ENCODE measurements at regions of chr3 and their contacts with region 1.

Region 1: DNA sequence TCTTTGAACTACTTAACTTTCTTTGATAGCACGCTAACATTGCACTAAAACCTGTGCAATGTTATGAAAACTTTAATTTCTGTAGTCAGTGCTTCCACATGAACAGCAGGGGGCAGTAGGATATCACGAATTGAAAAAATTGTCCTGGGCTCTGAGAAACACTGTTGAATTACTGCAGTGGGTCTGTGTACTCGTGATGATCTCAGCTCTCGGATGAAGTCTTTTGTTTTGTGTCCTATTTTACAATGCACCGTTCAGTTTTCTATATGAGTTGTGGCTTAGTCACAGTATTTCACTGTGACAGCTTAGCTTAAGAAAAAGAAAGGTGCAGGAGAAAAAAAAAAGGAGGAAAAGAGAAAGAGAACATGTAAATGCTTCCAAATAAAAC is 141.3 kb upstream of the CCDC54 start:
- DNase-seq: peak; percentile 66
- ATAC-seq: peak; percentile 86
- H3K4me3 ChIP-seq: peak overlapping the region; percentile 47 to 70 (median 60); a peak in 5 of 6 replicates
- H3K27ac ChIP-seq: no peak overlapping the region
- H3K4me1 ChIP-seq: peaks cover 17% of the 10 kb centered on the region
- H3K27me3 ChIP-seq: peaks cover 1 to 11% of the 10 kb centered on the region in 2 experiments; a peak in 3 of 5 replicates
- CTCF ChIP-seq: peak; percentile 84
- EP300 ChIP-seq: no peak
- POLR2A ChIP-seq: no peak
- RAD21 ChIP-seq: peak; percentile 69

Region 2: DNA sequence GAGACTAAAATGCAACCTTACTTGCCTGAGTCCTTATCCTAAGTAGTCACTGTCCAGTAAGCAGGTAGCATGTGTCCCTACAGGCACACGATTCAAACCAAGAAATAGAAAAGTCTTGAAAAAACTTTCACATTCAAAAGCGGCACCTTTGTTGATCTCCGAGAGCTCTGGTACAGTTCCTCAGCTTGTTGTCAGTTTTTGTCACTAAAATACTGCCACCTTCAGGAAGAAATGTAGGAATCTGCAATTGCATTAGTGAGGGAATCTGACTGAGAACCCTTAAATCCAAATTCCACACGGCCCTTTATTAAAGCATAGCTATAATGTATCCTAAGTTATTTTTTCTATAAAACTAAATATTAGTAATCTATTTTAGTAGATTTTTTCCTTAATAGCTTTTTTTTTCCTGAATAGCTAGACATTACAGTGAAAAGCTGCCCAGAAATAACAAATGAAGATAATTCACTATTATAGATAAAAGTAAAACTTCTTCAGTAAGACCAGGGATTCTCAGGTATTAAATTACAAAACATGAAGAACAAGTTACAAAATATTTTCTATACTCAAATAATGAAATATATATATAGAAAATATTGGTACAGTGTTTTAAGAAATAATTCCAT is 185.4 kb after region 1 on chr3:
- CTCF ChIA-PET with region 1: interaction called, 6 read pairs
- POLR2A ChIA-PET with region 1: no interaction called
- in situ Hi-C with region 1: loop called (anchors 10 kb)
- intact Hi-C with region 1: loop called (anchors 1 kb)
- DNase-seq: peak; percentile 52
- ATAC-seq: peak; percentile 75
- H3K4me3 ChIP-seq: no peak overlapping the region
- H3K27ac ChIP-seq: no peak overlapping the region
- H3K4me1 ChIP-seq: no peaks in the 10 kb centered on the region
- H3K27me3 ChIP-seq: no peaks in the 10 kb centered on the region; a peak in 1 of 5 replicates
- CTCF ChIP-seq: peak; percentile 71
- EP300 ChIP-seq: no peak
- POLR2A ChIP-seq: no peak
- RAD21 ChIP-seq: no peak

Region 3: GRCh38 chr3:107522510-107523288 is 286.8 kb after region 1 on chr3 and contains the start of gene BBX:
- CTCF ChIA-PET with region 1: no interaction called
- POLR2A ChIA-PET with region 1: no interaction called
- in situ Hi-C with region 1: loop called (anchors 25 kb)
- intact Hi-C with region 1: no loop called
- DNase-seq: peak; percentile 88
- ATAC-seq: peak; percentile 95
- H3K4me3 ChIP-seq: peak within 1 kb of the TSS; percentile 80 to 91 (median 86)
- H3K27ac ChIP-seq: peak within 1 kb of the TSS; percentile 82
- H3K4me1 ChIP-seq: peaks cover 20% of the 10 kb centered on the region
- H3K27me3 ChIP-seq: no peaks in the 10 kb centered on the region; a peak in 2 of 5 replicates
- CTCF ChIP-seq: no peak
- EP300 ChIP-seq: no peak
- POLR2A ChIP-seq: peak; percentile 52 to 74
- RAD21 ChIP-seq: 0 out of 2 replicates have a peak, but pooled peaks have one; percentile 18
- total RNA-seq, gene BBX: 13.7 and 20.6 TPM in 2 replicates

Region 4: DNA sequence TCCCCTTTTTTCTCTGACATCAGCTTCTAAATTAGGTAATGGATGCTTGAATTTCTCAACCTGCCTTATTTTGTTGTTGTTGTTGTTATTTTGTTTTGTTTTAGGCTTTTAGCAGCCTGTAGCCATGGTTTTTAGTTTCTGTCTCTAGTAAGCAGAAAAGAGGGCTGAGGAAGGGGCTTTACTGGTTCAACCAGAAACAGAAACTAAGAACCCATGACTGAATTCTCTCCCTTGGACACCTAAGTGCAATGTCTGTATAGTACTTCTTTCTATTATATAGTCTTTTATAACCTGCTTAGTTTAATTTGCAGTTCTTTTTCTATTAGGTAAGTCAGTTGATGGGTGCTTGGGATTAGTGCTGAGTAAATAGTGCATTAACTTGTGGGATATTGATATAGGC is 415.9 kb after region 1 on chr3:
- CTCF ChIA-PET with region 1: no interaction called
- POLR2A ChIA-PET with region 1: no interaction called
- in situ Hi-C with region 1: no loop called
- intact Hi-C with region 1: loop called (anchors 10 kb)
- DNase-seq: no peak
- ATAC-seq: no peak
- H3K4me3 ChIP-seq: no peak overlapping the region
- H3K27ac ChIP-seq: no peak overlapping the region
- H3K4me1 ChIP-seq: no peaks in the 10 kb centered on the region
- H3K27me3 ChIP-seq: no peaks in the 10 kb centered on the region
- CTCF ChIP-seq: no peak
- EP300 ChIP-seq: no peak
- POLR2A ChIP-seq: no peak
- RAD21 ChIP-seq: no peak

Region 5: GRCh38 chr3:107846279-107846852 is 610.4 kb after region 1 on chr3:
- CTCF ChIA-PET with region 1: interaction called, 6 read pairs
- POLR2A ChIA-PET with region 1: no interaction called
- in situ Hi-C with region 1: loop called (anchors 25 kb)
- intact Hi-C with region 1: loop called (anchors 2 kb)
- DNase-seq: peak; percentile 47
- ATAC-seq: peak; percentile 97
- H3K4me3 ChIP-seq: peak overlapping the region in 1 of 3 experiments; percentile 0; a peak in 1 of 6 replicates
- H3K27ac ChIP-seq: no peak overlapping the region
- H3K4me1 ChIP-seq: peaks cover 35% of the 10 kb centered on the region
- H3K27me3 ChIP-seq: peaks cover 0 to 15% of the 10 kb centered on the region in 2 experiments; a peak in 2 of 5 replicates
- CTCF ChIP-seq: peak; percentile 89
- EP300 ChIP-seq: no peak
- POLR2A ChIP-seq: no peak
- RAD21 ChIP-seq: peak; percentile 74

Region 6: GRCh38 chr3:108406661-108407206 is 1170.8 kb after region 1 on chr3:
- CTCF ChIA-PET with region 1: no interaction called
- POLR2A ChIA-PET with region 1: no interaction called
- in situ Hi-C with region 1: no loop called
- intact Hi-C with region 1: loop called (anchors 2 kb)
- DNase-seq: peak; percentile 71
- ATAC-seq: peak; percentile 99
- H3K4me3 ChIP-seq: no peak overlapping the region
- H3K27ac ChIP-seq: no peak overlapping the region
- H3K4me1 ChIP-seq: peaks cover 8% of the 10 kb centered on the region
- H3K27me3 ChIP-seq: peaks cover 0 to 4% of the 10 kb centered on the region in 2 experiments; a peak in 2 of 5 replicates
- CTCF ChIP-seq: peak; percentile 82
- EP300 ChIP-seq: no peak
- POLR2A ChIP-seq: no peak
- RAD21 ChIP-seq: peak; percentile 68